ENCODE measurements at regions of chr6 and their contacts with region 1.

Region 1: DNA sequence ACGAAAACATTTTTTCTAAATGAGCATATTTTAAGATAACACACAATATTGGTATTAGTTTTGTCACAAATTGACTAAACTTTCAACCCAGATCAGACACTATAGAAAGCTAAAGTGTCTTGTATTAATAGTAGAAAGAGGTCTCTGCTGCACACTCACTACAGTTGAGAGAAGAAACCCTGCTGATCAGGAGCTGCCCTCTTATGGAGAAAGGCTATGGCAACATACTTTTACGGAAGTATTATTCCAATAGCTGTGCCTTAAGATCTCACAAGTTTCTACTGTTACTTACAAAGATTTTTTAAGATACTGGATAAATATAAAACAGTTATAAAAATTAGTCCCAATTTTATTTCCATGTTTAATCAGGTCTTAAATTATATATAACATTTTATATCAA is 155.7 kb downstream of the RIMS1 start:
- DNase-seq: no peak
- H3K4me3 Mint-ChIP-seq: no peak overlapping the region
- H3K27ac Mint-ChIP-seq: no peak overlapping the region
- H3K4me1 Mint-ChIP-seq: peaks cover 2% of the 10 kb centered on the region
- H3K27me3 Mint-ChIP-seq: no peaks in the 10 kb centered on the region
- CTCF ChIP-seq: no peak

Region 2: DNA sequence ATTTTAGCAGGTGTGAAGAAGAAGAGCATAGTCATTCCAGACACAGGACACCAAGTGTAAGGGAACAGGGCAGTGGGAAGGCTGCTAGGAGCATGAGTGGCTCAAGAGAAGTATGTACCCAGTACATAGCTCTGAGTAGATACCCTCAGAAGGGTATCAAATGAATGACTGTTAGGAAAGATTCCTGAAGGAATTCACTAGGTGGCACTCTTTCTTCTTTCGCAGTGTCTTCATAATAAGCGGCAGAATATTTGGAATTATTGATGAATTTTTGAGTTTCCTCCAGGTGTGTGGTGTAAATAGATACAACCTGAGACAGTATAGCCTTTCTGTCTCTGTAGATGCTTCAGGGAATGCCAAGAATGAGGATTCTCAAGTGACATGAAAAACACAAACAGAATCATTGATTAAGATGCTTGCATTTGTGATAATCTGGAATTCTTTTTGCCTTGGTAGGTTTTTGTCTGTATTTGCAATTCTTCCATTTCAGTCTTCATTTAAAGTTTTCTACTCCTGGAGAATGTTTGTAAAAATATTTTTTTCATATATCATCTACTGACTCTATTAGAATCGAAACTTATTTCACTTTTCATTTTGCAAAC is 420.1 kb before region 1 on chr6:
- CTCF ChIA-PET with region 1: no interaction called
- intact Hi-C with region 1: loop called (anchors 5 kb)
- DNase-seq: no peak
- H3K4me3 Mint-ChIP-seq: no peak overlapping the region
- H3K27ac Mint-ChIP-seq: no peak overlapping the region
- H3K4me1 Mint-ChIP-seq: peaks cover 8% of the 10 kb centered on the region
- H3K27me3 Mint-ChIP-seq: no peaks in the 10 kb centered on the region
- CTCF ChIP-seq: peak; percentile 72

Region 3: GRCh38 chr6:71855406-71855805 is 186.7 kb before region 1 on chr6:
- CTCF ChIA-PET with region 1: no interaction called
- intact Hi-C with region 1: loop called (anchors 10 kb)
- DNase-seq: no peak
- H3K4me3 Mint-ChIP-seq: no peak overlapping the region
- H3K27ac Mint-ChIP-seq: no peak overlapping the region
- H3K4me1 Mint-ChIP-seq: no peaks in the 10 kb centered on the region
- H3K27me3 Mint-ChIP-seq: no peaks in the 10 kb centered on the region
- CTCF ChIP-seq: no peak